ENCODE measurements at regions of chr5 and their contacts with region 1.

Region 1: GRCh38 chr5:53170748-53171349 is 61.3 kb upstream of the MOCS2 start:
- DNase-seq: peak; percentile 69
- ATAC-seq: peak; percentile 92
- H3K4me3 ChIP-seq: no peak overlapping the region
- H3K27ac ChIP-seq: 0 out of 2 replicates have a peak overlapping the region, but pooled peaks have one; percentile 9
- H3K4me1 ChIP-seq: peaks cover 9% of the 10 kb centered on the region
- H3K27me3 ChIP-seq: no peaks in the 10 kb centered on the region
- CTCF ChIP-seq: peak; percentile 83

Region 2: GRCh38 chr5:52657247-52657645 is 513.6 kb before region 1 on chr5:
- CTCF ChIA-PET with region 1: no interaction called
- POLR2A ChIA-PET with region 1: no interaction called
- intact Hi-C with region 1: loop called (anchors 1 kb)
- DNase-seq: peak; percentile 63
- ATAC-seq: peak; percentile 35
- H3K4me3 ChIP-seq: no peak overlapping the region
- H3K27ac ChIP-seq: no peak overlapping the region
- H3K4me1 ChIP-seq: no peaks in the 10 kb centered on the region
- H3K27me3 ChIP-seq: peaks cover 40% of the 10 kb centered on the region
- CTCF ChIP-seq: peak; percentile 66

Region 3: DNA sequence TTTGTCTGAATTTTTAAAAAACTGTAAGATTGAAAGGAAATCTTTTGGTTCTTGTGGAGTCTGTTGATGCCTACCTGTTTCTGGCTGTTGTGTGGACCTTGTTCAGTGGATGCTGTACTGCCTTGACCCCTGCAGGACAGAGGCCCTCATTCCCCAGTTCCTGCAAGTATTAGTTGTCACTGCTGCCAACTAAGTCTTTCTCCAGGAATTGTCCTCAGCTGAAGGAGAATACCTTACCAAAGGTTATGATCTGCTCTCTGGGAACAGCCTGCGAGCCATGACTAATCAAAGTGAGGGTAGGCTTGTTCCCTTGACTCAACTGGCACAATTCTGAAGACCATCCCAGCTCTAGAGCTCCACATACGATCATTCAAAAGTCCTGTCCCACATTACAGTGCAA is 164.3 kb after region 1 on chr5:
- CTCF ChIA-PET with region 1: no interaction called
- POLR2A ChIA-PET with region 1: no interaction called
- intact Hi-C with region 1: loop called (anchors 2 kb)
- DNase-seq: peak; percentile 48
- ATAC-seq: peak; percentile 7; the same call in 1 of the 2 replicates
- H3K4me3 ChIP-seq: no peak overlapping the region
- H3K27ac ChIP-seq: peak overlapping the region; percentile 100
- H3K4me1 ChIP-seq: peaks cover 63% of the 10 kb centered on the region
- H3K27me3 ChIP-seq: no peaks in the 10 kb centered on the region
- CTCF ChIP-seq: peak; percentile 47; the same call in 1 of the 2 replicates

Region 4: GRCh38 chr5:53425598-53426511 is 255.0 kb after region 1 on chr5:
- CTCF ChIA-PET with region 1: no interaction called
- POLR2A ChIA-PET with region 1: no interaction called
- intact Hi-C with region 1: loop called (anchors 1 kb)
- DNase-seq: peak; percentile 46
- ATAC-seq: no peak
- H3K4me3 ChIP-seq: no peak overlapping the region
- H3K27ac ChIP-seq: peak overlapping the region; percentile 100
- H3K4me1 ChIP-seq: peaks cover 73% of the 10 kb centered on the region
- H3K27me3 ChIP-seq: no peaks in the 10 kb centered on the region
- CTCF ChIP-seq: peak; percentile 53

Measured in PC-3 (cell line).